Left colon (tissue), 2 donors: ENCODE measurements at regions of chr5 and their contacts with region 1.

Region 1: DNA sequence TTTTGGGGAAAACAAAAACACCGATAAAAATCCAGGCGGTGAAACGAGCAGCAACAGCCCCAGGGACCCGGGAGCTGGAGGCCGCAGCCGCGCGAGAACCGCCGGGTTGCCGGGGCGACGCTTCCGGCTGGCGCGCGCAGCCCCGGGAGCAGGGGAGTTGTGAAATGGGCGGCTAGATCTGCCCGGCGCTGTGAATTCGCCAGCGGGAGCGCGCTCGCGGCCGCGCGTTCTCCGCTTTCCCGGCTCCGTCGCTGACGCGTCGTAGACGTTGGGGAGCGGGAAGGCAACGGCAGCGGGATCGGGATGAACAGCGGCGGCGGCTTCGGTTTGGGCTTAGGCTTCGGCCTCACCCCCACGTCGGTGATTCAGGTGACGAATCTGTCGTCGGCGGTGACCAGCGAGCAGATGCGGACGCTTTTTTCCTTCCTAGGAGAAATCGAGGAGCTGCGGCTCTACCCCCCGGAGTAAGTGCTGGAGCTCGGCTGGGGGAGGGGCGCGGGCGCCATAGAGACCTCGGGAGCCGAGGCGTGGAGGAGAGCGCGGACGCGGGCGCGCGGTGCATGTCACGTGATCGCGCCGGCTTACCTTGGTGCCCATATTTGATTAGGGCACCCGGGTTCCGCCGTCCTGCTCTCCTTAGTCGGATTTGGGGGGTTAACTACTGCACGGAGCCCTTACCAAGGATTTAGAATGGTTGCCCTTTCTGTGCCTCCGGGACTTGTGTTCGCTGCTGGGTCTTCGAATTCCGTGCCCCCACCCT is at the start of gene SREK1:
- DNase-seq: peak; percentile 89 to 97
- ATAC-seq: peak; percentile 91
- total RNA-seq, gene SREK1: 49.4 to 55.6 TPM

Region 2: DNA sequence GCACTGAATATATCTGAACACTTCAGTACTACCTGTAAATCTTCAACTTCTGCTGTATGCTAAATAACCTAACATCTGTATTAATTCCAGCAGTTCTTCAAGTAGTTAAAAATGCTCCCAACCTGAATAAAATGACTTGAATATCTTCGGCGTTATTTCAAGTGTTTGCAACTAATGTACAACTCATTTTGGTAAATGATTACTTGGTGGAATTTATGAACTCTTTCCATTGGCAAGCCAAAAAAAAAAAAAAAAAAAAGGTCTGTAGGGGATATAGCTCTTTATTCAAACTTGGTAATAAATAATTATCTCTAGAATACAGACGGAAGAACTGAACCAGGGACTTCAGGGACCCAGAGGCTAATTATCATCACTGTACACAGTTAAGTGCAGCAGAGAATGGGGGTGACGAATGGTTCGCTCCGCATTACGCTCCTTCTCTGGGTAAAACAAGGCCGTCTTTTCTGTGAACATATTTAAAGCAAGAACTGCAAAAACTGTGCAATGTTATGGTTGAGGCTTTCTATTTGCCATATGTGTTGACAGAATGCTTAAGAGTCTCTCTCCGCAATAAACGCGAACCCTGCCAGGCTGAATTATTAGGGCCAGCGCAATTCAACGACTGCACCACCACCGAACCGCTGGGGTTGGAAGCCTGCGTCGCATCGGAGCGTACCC is 219.7 kb before region 1 on chr5:
- intact Hi-C with region 1: loop called in 1 of 2 experiments (anchors 5 kb)
- DNase-seq: no peak
- ATAC-seq: peak; percentile 2